Activated CD8-positive, alpha-beta memory T cell treated with anti-CD3 and anti-CD28 coated beads, Interleukin-2, amount 10 ng/mL, durations not matched to agents 7 days and 5 days (primary cell): ENCODE measurements at regions of chr4 and their contacts with region 1.

Region 1: GRCh38 chr4:931960-932712 is at the starts of genes GAK and TMEM175:
- DNase-seq: peak; percentile 98
- ATAC-seq: peak; percentile 93
- H3K4me3 Mint-ChIP-seq: peak within 1 kb of the TSS; percentile 97
- H3K27ac Mint-ChIP-seq: peak within 1 kb of the TSS; percentile 97
- H3K4me1 Mint-ChIP-seq: peaks cover 41% of the 10 kb centered on the region
- H3K27me3 Mint-ChIP-seq: no peaks in the 10 kb centered on the region
- total RNA-seq, gene GAK: 152 to 176 TPM
- total RNA-seq, gene TMEM175: 23.4 to 37.2 TPM

Region 2: DNA sequence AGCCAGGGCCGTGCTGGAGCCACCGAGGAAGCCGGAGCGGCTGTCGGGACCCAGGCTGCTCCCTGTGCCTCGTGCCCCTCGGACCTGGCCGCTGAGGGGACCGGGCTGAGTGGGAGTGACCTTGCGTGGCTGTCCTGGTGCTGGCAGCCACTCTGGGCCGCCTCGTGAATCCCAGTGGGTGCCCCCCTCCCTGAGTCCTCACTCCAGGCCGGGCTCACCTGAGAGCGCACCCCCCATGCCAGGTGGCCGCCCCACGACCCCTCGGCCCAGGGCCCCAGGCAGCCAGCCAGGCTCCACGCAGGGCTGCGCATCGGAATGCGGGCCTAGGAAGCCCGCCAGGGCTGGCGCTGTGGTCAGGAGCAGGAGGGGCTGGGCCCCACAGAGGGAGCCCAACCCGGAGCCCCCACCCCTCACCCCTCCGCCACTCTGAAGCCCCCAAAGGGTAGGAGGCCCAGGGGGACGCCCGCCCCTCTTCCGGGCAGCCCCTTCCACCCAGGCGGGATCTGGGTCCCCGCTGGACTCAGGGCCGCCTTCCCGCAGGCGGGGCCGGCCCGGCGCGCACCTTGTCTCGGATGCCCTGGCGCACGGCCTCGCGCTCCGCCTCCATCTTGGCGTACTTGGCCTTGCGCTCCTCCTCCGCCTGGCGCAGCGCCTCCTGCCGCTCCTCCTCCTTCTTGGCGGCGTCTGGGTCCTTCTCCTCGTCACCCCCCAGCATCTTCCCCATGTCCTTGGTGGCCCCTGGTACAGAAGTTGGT is 140.1 kb before region 1 on chr4:
- CTCF ChIA-PET with region 1: no interaction called
- DNase-seq: peak; percentile 57
- ATAC-seq: peak; percentile 68
- H3K4me3 Mint-ChIP-seq: peak overlapping the region; percentile 52
- H3K27ac Mint-ChIP-seq: no peak overlapping the region
- H3K4me1 Mint-ChIP-seq: peaks cover 30% of the 10 kb centered on the region
- H3K27me3 Mint-ChIP-seq: peaks cover 49% of the 10 kb centered on the region

Region 3: GRCh38 chr4:986879-987623 is 54.9 kb after region 1 on chr4 and contains the start of gene IDUA:
- CTCF ChIA-PET with region 1: interaction called, 26 read pairs
- DNase-seq: peak; percentile 91
- ATAC-seq: peak; percentile 90
- H3K4me3 Mint-ChIP-seq: peak within 1 kb of the TSS; percentile 86
- H3K27ac Mint-ChIP-seq: peak within 1 kb of the TSS; percentile 81
- H3K4me1 Mint-ChIP-seq: peaks cover 25% of the 10 kb centered on the region
- H3K27me3 Mint-ChIP-seq: no peaks in the 10 kb centered on the region
- total RNA-seq, gene IDUA: 27.1 to 28.1 TPM